Heart right ventricle (tissue), 16 donors: ENCODE measurements at regions of chr1 and their contacts with region 1.

Region 1: DNA sequence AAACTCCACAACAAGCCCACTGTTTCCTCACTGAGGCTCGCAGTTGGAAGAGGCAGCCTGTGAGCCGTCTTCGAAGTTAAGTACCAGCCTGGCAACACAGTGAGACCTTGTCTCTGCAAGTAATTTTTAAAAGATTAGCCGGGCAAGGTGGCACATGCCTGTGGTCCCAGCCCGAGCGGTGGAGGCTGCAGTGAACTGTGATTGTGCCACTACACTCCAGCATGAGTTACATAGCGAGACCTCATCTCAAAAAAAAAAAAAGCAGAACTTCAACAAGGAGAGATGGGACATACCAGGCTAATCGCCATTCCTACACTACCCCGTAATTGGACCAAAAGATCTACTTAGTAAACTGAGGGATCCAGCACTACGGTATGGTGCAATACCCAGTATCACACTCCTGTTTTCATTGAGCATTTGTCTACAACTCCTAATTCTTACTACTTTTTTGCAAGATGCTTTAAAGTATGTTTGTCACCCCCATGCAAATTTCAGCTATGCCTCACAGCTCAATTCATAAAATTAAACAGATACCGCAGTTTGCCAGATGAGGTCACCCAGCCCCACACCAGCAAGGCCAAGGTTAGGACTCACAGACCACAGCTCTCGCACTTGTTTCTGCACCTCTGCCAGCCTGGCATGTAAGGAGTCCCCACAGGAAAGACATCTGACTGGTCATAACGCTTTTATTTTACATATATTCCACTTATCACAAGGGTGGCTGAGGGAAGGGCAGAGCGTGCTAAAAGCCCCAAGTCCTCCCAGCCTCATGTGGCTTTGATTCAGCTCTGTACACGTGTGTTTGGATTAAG is 21.0 kb downstream of the SDE2 start:
- DNase-seq: no peak
- ATAC-seq: no peak
- H3K4me3 ChIP-seq: no peak overlapping the region
- H3K27ac ChIP-seq: no peak overlapping the region
- H3K4me1 ChIP-seq: peaks cover 0 to 12% (median 0%) of the 10 kb centered on the region in 9 donors
- H3K27me3 ChIP-seq: no peaks in the 10 kb centered on the region
- CTCF ChIP-seq: no peak

Region 2: GRCh38 chr1:225474986-225475820 is 502.9 kb before region 1 on chr1:
- intact Hi-C with region 1: loop called (anchors 1 to 5 kb)
- DNase-seq: peak in 1 of 2 donors; percentile 69
- ATAC-seq: peak; percentile 84 to 90 (median 90)
- H3K4me3 ChIP-seq: peak overlapping the region in 4 of 10 donors; percentile 19 to 35 (median 26)
- H3K27ac ChIP-seq: no peak overlapping the region
- H3K4me1 ChIP-seq: peaks cover 0 to 9% (median 6%) of the 10 kb centered on the region in 9 donors
- H3K27me3 ChIP-seq: no peaks in the 10 kb centered on the region
- CTCF ChIP-seq: peak; percentile 100

Region 3: DNA sequence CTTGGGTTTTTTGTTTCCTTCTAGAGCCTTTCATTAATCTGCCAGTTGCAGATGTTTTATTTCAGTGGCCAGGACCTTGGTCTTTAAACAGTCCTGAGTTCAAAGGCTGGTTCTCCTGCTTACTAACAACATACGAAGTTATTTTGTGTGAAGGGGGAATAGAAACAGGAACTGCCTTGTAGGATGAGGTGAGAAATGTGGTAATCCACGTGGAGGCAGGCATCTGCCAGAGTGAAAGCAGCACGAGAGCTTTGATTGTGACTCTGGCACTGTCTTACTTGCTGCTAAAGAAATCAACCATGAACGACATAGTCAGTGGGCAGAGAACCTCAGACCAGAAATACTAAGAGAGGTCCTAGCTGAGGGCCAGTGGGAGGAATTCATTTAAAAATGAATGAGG is 126.3 kb before region 1 on chr1:
- intact Hi-C with region 1: loop called in 1 of 10 experiments (anchors 10 kb)
- DNase-seq: no peak
- ATAC-seq: no peak
- H3K4me3 ChIP-seq: no peak overlapping the region
- H3K27ac ChIP-seq: no peak overlapping the region
- H3K4me1 ChIP-seq: peaks cover 0 to 43% (median 8%) of the 10 kb centered on the region in 9 donors
- H3K27me3 ChIP-seq: no peaks in the 10 kb centered on the region
- CTCF ChIP-seq: no peak

Region 4: DNA sequence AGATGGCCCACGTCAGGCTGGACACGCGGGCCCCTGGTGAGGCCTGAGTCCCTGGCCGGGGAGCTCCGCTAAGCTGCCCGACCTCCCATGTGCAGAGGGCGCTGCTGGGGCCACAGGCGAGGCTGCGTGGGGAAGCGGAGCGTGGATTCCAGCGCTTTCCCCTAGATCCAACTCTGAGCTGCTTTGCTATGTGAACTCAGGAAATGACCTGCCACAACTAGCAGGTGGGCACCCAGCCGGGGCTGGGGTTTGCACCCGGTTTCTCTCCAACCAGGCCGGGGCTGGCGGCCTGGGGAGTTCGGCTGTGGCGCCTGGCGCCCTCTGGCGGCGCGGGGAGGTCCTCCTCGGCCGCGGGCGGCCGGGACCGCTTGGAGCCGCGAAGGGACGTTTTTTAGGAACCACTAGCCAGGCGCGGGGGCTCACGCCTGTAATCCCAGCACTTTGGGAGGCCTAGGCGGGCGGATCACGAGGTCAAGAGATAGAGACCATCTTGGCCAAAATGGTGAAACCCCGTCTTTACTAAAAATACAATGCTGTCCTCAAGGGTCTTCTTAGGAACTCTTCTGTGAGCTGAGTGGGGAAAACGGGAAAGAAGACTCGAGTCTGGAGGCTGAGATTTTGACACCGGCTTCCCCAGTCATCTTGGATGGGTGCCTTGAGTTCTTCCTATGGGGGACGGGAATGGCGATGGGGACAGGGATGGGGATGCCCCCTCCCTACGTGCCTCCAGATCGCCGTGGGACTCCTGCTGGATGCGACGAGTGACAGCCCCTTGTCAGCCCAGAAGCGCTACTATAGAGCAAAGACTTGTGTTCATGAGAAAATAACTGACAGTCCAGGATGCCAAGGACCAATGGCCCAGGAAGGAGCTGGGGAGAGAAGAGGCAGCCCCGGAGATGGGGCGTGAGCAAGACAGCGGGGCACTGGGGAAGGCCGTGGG is 66.7 kb before region 1 on chr1:
- intact Hi-C with region 1: loop called in 4 of 10 experiments (anchors 1 to 10 kb)
- DNase-seq: peak; percentile 50 to 81
- ATAC-seq: peak; percentile 80 to 95 (median 90)
- H3K4me3 ChIP-seq: peak overlapping the region in 5 of 10 donors; percentile 19 to 35 (median 26)
- H3K27ac ChIP-seq: no peak overlapping the region
- H3K4me1 ChIP-seq: peaks cover 0 to 13% (median 4%) of the 10 kb centered on the region in 9 donors
- H3K27me3 ChIP-seq: no peaks in the 10 kb centered on the region
- CTCF ChIP-seq: peak; percentile 88 to 98 (median 96)